Activated T-helper 1 cell treated with anti-CD3 and anti-CD28 coated beads, Interleukin-12 subunit alpha, Interleukin-12 subunit beta, Interleukin-2, Interleukin-4 antibody, amounts not matched to agents 30 ng/mL and 10 ng/mL and 1 ng/mL, durations not matched to agents 14 hours and 24 hours and 36 hours (primary cell): ENCODE measurements at regions of chr1 and their contacts with region 1.

Region 1: GRCh38 chr1:58903514-58904298 is 119.9 kb upstream of the JUN start:
- DNase-seq: peak; percentile 81
- H3K4me3 Mint-ChIP-seq: peak overlapping the region; percentile 76
- H3K27ac Mint-ChIP-seq: peak overlapping the region; percentile 87
- H3K4me1 Mint-ChIP-seq: peaks cover 32% of the 10 kb centered on the region
- H3K27me3 Mint-ChIP-seq: no peaks in the 10 kb centered on the region

Region 2: DNA sequence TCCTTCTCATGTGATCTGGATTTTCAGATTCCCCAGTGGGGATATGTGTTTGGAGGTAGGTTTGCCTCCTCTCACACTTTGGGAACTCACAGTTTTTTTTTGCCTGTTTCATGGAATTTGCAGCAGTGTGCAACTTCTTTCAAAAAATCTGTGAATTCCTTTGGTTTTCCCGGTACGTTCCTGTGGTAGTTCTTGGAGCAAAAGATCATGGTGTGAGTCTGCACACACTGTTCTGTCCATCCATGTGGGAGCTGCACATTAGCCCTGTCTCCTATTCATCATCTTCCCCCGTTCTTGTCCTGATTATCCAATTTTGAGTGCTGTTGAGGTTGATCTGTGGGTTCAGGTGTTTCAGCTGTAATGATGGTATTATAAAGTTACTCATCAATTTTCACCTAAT is 296.3 kb before region 1 on chr1:
- intact Hi-C with region 1: no loop called
- DNase-seq: no peak
- H3K4me3 Mint-ChIP-seq: no peak overlapping the region
- H3K27ac Mint-ChIP-seq: no peak overlapping the region
- H3K4me1 Mint-ChIP-seq: no peaks in the 10 kb centered on the region
- H3K27me3 Mint-ChIP-seq: peaks cover 22% of the 10 kb centered on the region

Region 3: DNA sequence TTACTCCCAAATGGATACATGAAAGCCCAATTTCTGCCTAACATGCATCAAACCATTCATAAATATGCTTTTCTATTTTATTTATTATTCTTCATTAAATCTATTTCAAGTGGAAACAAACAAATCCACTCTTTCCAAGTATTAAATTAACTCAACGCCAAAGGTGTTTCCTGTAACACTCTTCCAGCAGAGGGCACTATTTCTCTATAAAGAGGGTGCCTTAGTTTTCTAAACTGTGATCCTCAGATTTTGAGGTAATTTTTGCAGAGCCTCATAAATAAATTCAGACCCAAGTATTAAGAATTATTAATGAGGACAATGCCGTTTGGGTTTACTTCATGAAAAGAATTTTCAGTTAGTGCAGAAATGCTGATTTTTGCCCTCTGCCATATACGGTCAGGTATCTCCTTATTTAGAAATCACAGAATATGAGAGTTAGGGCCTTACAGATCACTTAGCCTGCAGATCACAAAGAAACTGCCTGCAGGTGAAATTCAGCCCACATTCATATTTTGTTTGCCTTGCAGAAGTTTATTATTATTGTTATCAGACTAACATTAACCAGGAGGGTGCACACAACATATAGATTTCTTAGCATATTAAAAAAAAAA is 163.7 kb before region 1 on chr1:
- intact Hi-C with region 1: no loop called
- DNase-seq: no peak
- H3K4me3 Mint-ChIP-seq: no peak overlapping the region
- H3K27ac Mint-ChIP-seq: no peak overlapping the region
- H3K4me1 Mint-ChIP-seq: peaks cover 18% of the 10 kb centered on the region
- H3K27me3 Mint-ChIP-seq: peaks cover 7% of the 10 kb centered on the region

Region 4: GRCh38 chr1:58816072-58816746 is 87.5 kb before region 1 on chr1:
- intact Hi-C with region 1: loop called (anchors 1 kb)
- DNase-seq: peak; percentile 83
- H3K4me3 Mint-ChIP-seq: peak overlapping the region; percentile 83
- H3K27ac Mint-ChIP-seq: peak overlapping the region; percentile 86
- H3K4me1 Mint-ChIP-seq: peaks cover 56% of the 10 kb centered on the region
- H3K27me3 Mint-ChIP-seq: peaks cover 2% of the 10 kb centered on the region

Region 5: DNA sequence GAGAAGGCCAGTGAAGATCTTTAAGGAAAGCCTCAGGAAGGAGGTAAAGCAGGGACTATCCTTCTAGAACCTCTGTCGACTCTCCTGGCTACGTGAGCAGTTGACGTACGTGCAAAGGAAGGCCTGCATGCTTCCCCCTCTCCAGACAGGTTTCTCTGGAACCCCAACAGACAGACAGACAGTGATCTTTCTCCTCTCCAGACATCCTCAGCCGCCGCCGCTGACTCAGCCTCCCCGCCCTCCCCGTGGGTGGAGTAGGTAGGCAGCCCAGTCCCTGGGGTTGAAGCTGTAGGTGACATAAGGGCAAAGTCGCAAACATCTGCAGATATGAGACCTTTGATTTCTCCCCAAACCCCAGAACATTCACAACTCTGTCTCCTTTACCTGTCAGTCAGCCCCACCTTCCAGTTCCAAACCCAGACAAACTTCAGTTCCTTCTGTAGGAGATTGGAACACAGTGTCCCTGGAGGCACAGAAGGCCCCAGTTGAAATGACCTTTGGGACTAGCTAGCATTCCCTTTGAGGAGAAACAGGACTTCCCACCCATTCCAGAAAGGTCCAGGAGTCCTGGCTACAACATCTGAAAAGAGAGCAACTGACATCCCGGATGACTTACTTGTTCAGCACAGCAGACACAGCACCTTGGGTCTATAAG is 26.1 kb after region 1 on chr1:
- intact Hi-C with region 1: loop called (anchors 1 kb)
- DNase-seq: peak; percentile 60
- H3K4me3 Mint-ChIP-seq: peak overlapping the region; percentile 38
- H3K27ac Mint-ChIP-seq: peak overlapping the region; percentile 49
- H3K4me1 Mint-ChIP-seq: peaks cover 69% of the 10 kb centered on the region
- H3K27me3 Mint-ChIP-seq: no peaks in the 10 kb centered on the region

Region 6: DNA sequence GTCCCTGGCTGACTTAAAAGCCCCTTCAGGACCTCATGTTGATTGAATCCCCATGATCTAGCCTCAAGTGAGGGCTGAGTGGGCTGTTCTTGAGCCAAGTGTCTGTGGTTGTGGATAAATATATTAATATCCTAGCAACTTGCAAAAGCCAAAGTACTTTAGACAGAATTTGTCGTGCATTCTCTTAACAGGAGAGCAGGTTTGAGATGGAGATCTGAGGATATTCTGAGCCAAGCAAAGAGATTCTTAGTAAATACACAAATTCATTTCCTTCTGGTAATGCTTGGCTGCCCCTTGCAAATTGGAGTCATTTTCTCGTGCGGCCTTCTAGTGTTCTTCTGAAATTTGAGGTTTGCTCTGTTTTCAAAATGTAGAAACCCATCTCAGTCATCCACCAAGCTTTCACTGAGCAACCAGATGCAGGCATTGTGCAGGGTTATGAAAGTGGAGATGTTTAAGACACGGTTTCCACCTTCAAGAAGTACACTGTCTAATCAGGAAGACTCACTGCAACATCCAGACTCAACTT is 122.3 kb after region 1 on chr1:
- intact Hi-C with region 1: loop called (anchors 1 kb)
- DNase-seq: no peak
- H3K4me3 Mint-ChIP-seq: no peak overlapping the region
- H3K27ac Mint-ChIP-seq: no peak overlapping the region
- H3K4me1 Mint-ChIP-seq: peaks cover 17% of the 10 kb centered on the region
- H3K27me3 Mint-ChIP-seq: no peaks in the 10 kb centered on the region

Region 7: GRCh38 chr1:59204001-59204400 is 300.3 kb after region 1 on chr1:
- intact Hi-C with region 1: no loop called
- DNase-seq: no peak
- H3K4me3 Mint-ChIP-seq: no peak overlapping the region
- H3K27ac Mint-ChIP-seq: no peak overlapping the region
- H3K4me1 Mint-ChIP-seq: no peaks in the 10 kb centered on the region
- H3K27me3 Mint-ChIP-seq: peaks cover 5% of the 10 kb centered on the region

Region 8: DNA sequence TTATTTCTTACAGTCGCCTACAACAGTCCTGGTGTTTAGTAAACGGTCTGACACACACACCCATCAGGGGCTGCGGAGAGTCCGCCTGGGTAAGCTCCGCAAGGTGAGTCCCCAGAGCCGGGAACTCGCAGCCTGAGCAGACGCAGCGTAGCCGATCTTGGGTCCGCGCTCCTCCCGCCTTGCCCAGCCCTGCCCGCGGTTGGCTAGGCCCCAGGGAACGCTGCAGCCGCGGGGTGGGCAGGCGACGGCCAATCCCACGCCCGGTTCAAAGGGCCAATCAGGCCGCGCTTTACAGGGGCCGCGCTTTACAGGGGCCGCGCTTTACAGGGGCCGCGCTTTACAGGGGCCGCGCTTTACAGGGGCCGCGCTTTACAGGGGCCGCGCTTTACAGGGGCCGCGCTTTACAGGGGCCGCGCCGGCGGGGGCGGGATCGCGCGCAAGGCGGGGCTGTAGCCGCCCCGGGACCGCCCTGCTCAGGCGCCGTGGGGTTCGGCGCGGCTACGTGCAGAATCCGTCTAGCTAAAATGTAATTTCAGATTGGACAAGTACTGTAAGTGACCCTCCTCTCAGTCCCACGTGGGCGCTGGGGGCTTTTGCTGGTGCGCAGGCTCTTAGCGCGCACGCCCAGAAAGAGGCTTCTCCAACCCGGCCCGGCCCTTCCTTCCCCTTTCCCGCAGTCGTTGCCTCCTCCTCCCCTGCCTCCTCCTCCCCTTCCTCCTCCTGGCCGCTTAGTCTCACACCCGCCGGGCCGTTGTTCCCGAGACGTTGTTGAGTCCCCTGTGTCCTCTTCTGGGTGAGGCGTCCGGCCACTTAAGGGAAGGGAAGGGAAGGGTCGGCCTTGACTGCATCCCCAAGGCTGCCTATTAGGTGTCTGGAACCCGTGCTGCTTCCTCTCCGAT is 392.9 kb after region 1 on chr1 and contains the start of gene FGGY:
- intact Hi-C with region 1: loop called (anchors 1 kb)
- DNase-seq: peak; percentile 86
- H3K4me3 Mint-ChIP-seq: peak within 1 kb of the TSS; percentile 91
- H3K27ac Mint-ChIP-seq: peak within 1 kb of the TSS; percentile 91
- H3K4me1 Mint-ChIP-seq: peaks cover 48% of the 10 kb centered on the region
- H3K27me3 Mint-ChIP-seq: no peaks in the 10 kb centered on the region
- total RNA-seq, gene FGGY: 7.1 and 8.2 TPM in 2 replicates